GM10248 (cell line): ENCODE measurements at regions of chr22 and their contacts with region 1.

Region 1: DNA sequence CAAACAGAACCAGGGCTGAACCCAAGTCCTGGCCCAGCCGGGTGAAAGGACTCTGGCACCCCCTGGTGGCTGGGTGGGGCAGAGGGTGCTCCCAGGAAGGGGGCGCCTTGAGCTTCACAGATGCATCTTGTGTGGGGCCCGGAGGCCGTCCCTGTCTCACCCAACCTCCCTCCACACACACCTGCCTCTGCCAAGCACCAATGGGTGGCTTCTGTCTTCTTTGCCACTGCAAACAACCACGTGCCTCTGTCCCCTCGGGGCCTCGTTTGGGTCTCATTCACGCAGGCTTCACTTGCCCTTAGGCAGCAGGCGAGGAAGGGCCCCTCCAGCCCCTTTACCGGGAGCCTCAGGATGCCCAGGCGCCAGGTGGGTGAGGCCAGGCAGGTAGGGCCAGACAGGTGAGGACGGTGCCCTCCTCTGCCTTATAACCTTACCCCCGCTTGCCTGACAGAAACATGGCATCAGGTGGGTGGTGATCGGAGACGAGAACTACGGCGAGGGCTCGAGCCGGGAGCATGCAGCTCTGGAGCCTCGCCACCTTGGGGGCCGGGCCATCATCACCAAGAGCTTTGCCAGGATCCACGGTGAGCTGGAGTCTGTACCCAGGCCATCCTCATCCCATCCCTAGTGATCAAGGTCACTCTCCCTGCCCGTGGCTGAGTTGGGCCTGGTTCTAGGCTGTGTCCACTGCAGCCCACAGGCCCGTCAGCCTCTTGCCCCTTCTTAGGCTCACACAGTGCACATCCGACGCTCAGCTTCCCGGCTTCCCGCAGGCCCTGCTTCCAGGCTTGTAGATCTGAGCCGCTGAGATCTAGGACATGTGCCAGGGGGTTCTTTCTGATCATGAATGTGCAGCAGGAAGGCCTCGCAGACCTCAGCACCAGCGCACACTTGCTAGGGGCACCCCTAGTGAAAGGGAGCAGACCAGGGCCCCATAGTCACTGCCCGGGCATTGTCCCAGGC is 17.2 kb downstream of the POLR3H start:
- DNase-seq: peak; percentile 80
- CTCF ChIP-seq: peak; percentile 90

Region 2: GRCh38 chr22:41264408-41264941 is 262.6 kb before region 1 on chr22:
- CTCF ChIA-PET with region 1: no interaction called
- POLR2A ChIA-PET with region 1: no interaction called
- DNase-seq: no peak
- CTCF ChIP-seq: no peak

Region 3: DNA sequence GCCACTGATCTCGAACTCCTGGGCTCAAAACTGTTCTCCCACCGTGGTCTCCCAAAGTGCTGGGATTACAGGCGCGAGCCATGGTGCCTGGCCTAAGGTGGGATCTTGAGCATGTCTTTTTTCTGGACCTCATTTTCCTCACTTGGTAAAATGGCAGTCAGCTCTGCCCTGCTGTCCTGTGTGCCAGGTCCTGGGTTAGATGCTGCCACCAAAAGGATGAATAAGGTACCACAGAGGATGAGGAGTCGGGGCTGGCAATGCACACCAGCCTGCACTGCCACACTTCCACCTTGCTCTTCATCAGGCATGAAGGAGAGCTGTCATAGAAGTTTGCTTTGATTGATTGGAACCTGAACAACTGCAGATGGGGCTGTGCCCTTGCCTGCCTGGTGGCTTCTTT is 25.9 kb before region 1 on chr22:
- CTCF ChIA-PET with region 1: interaction called, 10 read pairs
- POLR2A ChIA-PET with region 1: no interaction called
- DNase-seq: peak; percentile 65
- CTCF ChIP-seq: no peak

Region 4: DNA sequence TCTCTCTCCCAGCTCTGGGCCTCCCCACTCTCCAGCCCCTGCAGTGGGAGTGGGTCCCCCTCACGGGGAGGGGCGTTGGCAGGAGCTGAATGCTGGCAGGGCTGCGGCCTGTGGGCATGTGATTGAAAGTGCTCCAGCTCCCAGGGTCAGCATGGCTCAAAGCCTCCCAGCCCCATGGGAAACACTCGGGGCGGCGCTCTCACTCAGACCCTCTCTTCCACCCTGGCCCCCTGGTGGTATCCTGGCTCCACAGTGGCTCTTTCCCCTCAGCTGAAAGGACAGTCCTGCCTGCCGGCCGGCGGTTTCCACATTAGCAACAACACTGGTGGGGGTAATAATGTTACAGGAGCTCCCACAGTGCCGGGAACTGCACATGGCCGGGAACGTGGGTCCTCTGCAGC is 18.3 kb before region 1 on chr22:
- CTCF ChIA-PET with region 1: interaction called, 10 read pairs
- POLR2A ChIA-PET with region 1: interaction called, 4 read pairs
- DNase-seq: no peak
- CTCF ChIP-seq: no peak

Region 5: GRCh38 chr22:41543854-41544670 is 16.9 kb after region 1 on chr22 and contains the start of gene POLR3H:
- CTCF ChIA-PET with region 1: interaction called, 18 read pairs
- POLR2A ChIA-PET with region 1: interaction called, 3 read pairs
- DNase-seq: peak; percentile 100
- CTCF ChIP-seq: peak; percentile 89